ENCODE measurements at regions of chr20 and their contacts with region 1.

Region 1: GRCh38 chr20:9616833-9617489 is 102.6 kb downstream of the LAMP5 start:
- DNase-seq: peak; percentile 32 to 49 (median 40)
- ATAC-seq: peak; percentile 88
- H3K4me3 ChIP-seq: no peak overlapping the region
- H3K27ac ChIP-seq: no peak overlapping the region
- H3K4me1 ChIP-seq: no peaks in the 10 kb centered on the region
- H3K27me3 ChIP-seq: no peaks in the 10 kb centered on the region
- CTCF ChIP-seq: peak; percentile 60 to 82 (median 62)
- EP300 ChIP-seq: no peak
- POLR2A ChIP-seq: no peak
- RAD21 ChIP-seq: peak; percentile 66 to 71

Region 2: DNA sequence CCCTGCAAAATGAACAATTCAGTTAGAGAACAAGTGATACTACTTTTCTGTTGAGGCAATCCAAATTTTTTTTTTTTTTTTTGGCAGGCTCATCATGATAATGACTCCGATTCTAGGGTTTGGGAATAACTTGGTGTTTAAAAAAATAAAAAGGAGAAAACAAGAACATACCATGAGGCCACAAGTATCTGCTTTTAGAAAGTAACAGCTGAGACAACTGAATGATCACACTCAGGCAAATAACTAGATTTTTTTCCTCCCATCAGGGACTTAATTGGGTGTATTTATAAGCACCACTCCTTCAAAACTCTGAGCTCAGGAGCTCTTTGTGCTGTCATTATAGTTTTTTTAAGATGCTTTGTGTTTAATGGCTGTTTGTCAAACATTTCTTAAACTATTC is 192.3 kb after region 1 on chr20:
- CTCF ChIA-PET with region 1: no interaction called
- POLR2A ChIA-PET with region 1: no interaction called
- in situ Hi-C with region 1: no loop called
- intact Hi-C with region 1: no loop called
- DNase-seq: no peak
- ATAC-seq: no peak
- H3K4me3 ChIP-seq: no peak overlapping the region
- H3K27ac ChIP-seq: no peak overlapping the region
- H3K4me1 ChIP-seq: no peaks in the 10 kb centered on the region
- H3K27me3 ChIP-seq: no peaks in the 10 kb centered on the region
- CTCF ChIP-seq: no peak
- EP300 ChIP-seq: no peak
- POLR2A ChIP-seq: no peak
- RAD21 ChIP-seq: no peak

Region 3: DNA sequence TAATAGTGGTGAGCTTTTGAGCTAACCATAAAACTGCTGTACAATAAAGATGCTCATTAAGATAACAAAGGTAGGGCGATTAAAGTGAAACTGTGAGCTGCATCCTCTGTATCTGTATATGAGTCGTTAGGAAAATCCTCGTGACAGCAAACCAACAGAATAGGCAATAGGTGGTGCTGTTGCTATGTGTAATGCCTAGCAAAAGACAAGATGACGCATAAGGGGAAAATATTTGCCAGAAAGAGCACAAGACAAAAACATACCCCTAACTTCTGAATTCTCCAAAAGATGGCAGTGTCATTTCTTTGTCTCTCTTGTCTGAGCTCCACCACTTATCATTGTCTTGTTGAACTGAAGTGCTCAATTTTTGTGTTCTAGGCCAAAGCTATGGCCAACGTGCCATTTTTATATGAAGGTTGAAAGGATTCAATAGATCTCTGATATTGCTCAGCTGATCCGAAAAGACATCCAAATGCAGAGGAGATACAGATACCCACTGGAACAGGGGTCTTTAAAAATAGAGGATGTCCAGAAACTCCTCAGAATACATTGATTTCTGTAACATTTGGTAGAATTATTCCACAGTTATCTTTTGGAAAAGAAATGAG is 361.5 kb after region 1 on chr20:
- CTCF ChIA-PET with region 1: no interaction called
- POLR2A ChIA-PET with region 1: no interaction called
- in situ Hi-C with region 1: no loop called
- intact Hi-C with region 1: loop called (anchors 10 kb)
- DNase-seq: peak in 3 of 4 experiments; percentile 6 to 64 (median 18)
- ATAC-seq: peak; percentile 76
- H3K4me3 ChIP-seq: no peak overlapping the region
- H3K27ac ChIP-seq: no peak overlapping the region
- H3K4me1 ChIP-seq: no peaks in the 10 kb centered on the region
- H3K27me3 ChIP-seq: no peaks in the 10 kb centered on the region
- CTCF ChIP-seq: peak; percentile 58 to 68 (median 60)
- EP300 ChIP-seq: no peak
- POLR2A ChIP-seq: no peak
- RAD21 ChIP-seq: peak; percentile 75 to 89

Region 4: DNA sequence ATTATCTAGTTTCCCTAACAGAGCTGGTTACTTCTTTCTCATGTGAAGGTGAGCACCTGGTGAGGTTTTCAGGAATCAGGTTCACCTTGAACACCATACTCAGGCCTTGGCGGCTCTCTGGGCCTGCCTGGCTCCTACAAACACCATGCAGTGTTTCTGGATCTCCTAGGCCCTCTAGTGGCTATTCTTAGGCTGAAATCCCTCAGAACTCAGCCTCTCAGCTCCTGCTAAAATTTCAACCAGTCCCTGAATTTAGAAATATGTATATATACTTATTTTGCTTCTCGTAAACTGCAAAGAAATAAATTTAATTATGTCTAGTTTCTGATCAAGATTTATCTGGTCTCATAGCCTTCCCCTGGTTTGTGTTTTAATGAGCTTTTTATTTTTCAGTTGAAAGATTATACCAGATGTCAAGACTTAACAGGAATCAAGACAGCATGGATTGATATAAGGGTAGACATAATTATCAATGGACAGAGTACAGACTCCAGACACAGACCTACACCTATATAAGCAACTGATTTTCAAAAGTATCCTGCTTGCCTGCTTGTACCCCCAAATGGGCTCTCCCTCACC is 473.7 kb after region 1 on chr20:
- CTCF ChIA-PET with region 1: no interaction called
- POLR2A ChIA-PET with region 1: no interaction called
- in situ Hi-C with region 1: no loop called
- intact Hi-C with region 1: loop called (anchors 5 kb)
- DNase-seq: peak; percentile 11 to 43 (median 16)
- ATAC-seq: peak; percentile 83
- H3K4me3 ChIP-seq: no peak overlapping the region
- H3K27ac ChIP-seq: no peak overlapping the region
- H3K4me1 ChIP-seq: no peaks in the 10 kb centered on the region
- H3K27me3 ChIP-seq: no peaks in the 10 kb centered on the region
- CTCF ChIP-seq: peak; percentile 49 to 56 (median 51)
- EP300 ChIP-seq: no peak
- POLR2A ChIP-seq: no peak
- RAD21 ChIP-seq: peak; percentile 38 to 66; a peak in 3 of 4 replicates

Region 5: GRCh38 chr20:10225439-10226060 is 608.6 kb after region 1 on chr20:
- CTCF ChIA-PET with region 1: no interaction called
- POLR2A ChIA-PET with region 1: no interaction called
- in situ Hi-C with region 1: no loop called
- intact Hi-C with region 1: loop called (anchors 5 kb)
- DNase-seq: peak; percentile 8 to 31 (median 18)
- ATAC-seq: peak; percentile 75
- H3K4me3 ChIP-seq: no peak overlapping the region
- H3K27ac ChIP-seq: no peak overlapping the region
- H3K4me1 ChIP-seq: no peaks in the 10 kb centered on the region
- H3K27me3 ChIP-seq: no peaks in the 10 kb centered on the region
- CTCF ChIP-seq: peak in 2 of 3 experiments; percentile 27 to 39; a peak in 2 of 6 replicates
- EP300 ChIP-seq: no peak
- POLR2A ChIP-seq: no peak
- RAD21 ChIP-seq: peak in 1 of 2 experiments; percentile 22; a peak in 1 of 4 replicates

Region 6: DNA sequence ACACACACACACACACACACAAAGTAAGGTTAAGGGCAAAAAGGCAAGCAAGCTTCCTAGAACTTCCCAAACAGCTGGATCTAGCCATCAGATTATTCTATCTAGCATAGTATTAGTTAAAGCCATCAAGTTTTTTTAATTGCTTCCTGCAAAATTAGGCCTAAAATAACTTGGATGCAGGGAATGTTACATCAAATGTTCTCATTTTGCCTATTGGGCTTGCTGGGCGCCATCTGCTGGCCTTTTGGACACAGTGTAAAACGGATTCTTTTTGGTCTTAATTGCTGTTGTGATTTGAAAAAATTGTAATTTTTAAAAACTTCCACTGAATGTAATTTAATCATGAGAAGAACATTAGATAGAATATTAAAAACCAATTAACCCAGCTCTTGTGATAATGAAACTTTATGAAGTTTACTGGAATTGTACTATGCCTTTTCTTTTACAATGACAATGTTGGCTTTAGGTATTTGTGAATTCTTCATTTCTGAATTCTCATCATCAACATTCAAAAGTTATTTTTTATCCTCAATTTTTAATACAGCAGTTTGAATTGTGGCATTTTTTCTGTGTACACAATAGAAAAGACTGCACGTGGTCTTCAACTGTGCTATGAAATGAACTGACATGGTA is 810.2 kb after region 1 on chr20:
- CTCF ChIA-PET with region 1: no interaction called
- POLR2A ChIA-PET with region 1: no interaction called
- in situ Hi-C with region 1: no loop called
- intact Hi-C with region 1: loop called (anchors 5 kb)
- DNase-seq: peak in 3 of 4 experiments; percentile 14 to 51 (median 18)
- ATAC-seq: peak; percentile 56; the same call in 1 of the 3 replicates
- H3K4me3 ChIP-seq: no peak overlapping the region
- H3K27ac ChIP-seq: no peak overlapping the region
- H3K4me1 ChIP-seq: peaks cover 0 to 14% of the 10 kb centered on the region in 2 experiments; a peak in 3 of 5 replicates
- H3K27me3 ChIP-seq: no peaks in the 10 kb centered on the region
- CTCF ChIP-seq: peak; percentile 29 to 67 (median 58); a peak in 5 of 6 replicates
- EP300 ChIP-seq: no peak
- POLR2A ChIP-seq: no peak
- RAD21 ChIP-seq: peak; percentile 32 to 50

Region 7: DNA sequence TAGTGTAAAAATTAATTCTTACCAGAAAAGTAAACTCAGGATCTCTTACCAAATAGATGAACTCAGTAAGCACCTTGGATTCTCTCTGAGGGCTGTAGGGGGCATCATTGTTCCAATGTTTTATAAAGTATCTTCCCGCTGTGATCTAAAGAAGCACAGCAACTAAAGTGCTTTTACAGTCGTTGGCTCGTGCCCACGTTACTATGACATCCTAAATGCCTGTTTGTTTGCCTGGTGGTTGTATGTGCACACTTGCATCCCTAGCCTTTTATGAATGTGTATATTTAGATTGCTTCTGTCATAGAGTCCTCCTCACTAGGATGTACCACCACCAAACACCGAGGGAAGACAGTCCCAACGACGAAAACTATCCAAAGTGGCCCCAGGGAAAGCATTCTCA is 852.6 kb after region 1 on chr20:
- CTCF ChIA-PET with region 1: no interaction called
- POLR2A ChIA-PET with region 1: no interaction called
- in situ Hi-C with region 1: no loop called
- intact Hi-C with region 1: loop called (anchors 5 kb)
- DNase-seq: peak in 3 of 4 experiments; percentile 10 to 64 (median 38)
- ATAC-seq: peak; percentile 85
- H3K4me3 ChIP-seq: no peak overlapping the region
- H3K27ac ChIP-seq: no peak overlapping the region
- H3K4me1 ChIP-seq: peaks cover 0 to 6% of the 10 kb centered on the region in 2 experiments; a peak in 1 of 5 replicates
- H3K27me3 ChIP-seq: no peaks in the 10 kb centered on the region
- CTCF ChIP-seq: peak; percentile 19 to 57 (median 41); a peak in 3 of 6 replicates
- EP300 ChIP-seq: no peak
- POLR2A ChIP-seq: no peak
- RAD21 ChIP-seq: peak; percentile 63 to 69

Region 8: GRCh38 chr20:11544029-11544678 is 1927.2 kb after region 1 on chr20:
- CTCF ChIA-PET with region 1: no interaction called
- POLR2A ChIA-PET with region 1: no interaction called
- in situ Hi-C with region 1: no loop called
- intact Hi-C with region 1: loop called (anchors 5 kb)
- DNase-seq: peak in 1 of 4 experiments; percentile 18
- ATAC-seq: no peak
- H3K4me3 ChIP-seq: no peak overlapping the region
- H3K27ac ChIP-seq: no peak overlapping the region
- H3K4me1 ChIP-seq: no peaks in the 10 kb centered on the region
- H3K27me3 ChIP-seq: no peaks in the 10 kb centered on the region
- CTCF ChIP-seq: peak in 1 of 3 experiments; percentile 31; a peak in 1 of 6 replicates
- EP300 ChIP-seq: no peak
- POLR2A ChIP-seq: no peak
- RAD21 ChIP-seq: peak; percentile 49 to 61

Measured in K562 (cell line).